ENCODE measurements at regions of chr7 and their contacts with region 1.

Region 1: GRCh38 chr7:816300-816750 is 16.0 kb upstream of the SUN1 start:
- DNase-seq: peak; percentile 98
- H3K4me3 ChIP-seq: peak overlapping the region; percentile 67 to 89 (median 86)
- H3K27ac ChIP-seq: peak overlapping the region; percentile 99
- H3K4me1 ChIP-seq: peaks cover 9 to 16% of the 10 kb centered on the region in 2 donors
- H3K27me3 ChIP-seq: no peaks in the 10 kb centered on the region
- CTCF ChIP-seq: no peak
- POLR2A ChIP-seq: no peak

Region 2: DNA sequence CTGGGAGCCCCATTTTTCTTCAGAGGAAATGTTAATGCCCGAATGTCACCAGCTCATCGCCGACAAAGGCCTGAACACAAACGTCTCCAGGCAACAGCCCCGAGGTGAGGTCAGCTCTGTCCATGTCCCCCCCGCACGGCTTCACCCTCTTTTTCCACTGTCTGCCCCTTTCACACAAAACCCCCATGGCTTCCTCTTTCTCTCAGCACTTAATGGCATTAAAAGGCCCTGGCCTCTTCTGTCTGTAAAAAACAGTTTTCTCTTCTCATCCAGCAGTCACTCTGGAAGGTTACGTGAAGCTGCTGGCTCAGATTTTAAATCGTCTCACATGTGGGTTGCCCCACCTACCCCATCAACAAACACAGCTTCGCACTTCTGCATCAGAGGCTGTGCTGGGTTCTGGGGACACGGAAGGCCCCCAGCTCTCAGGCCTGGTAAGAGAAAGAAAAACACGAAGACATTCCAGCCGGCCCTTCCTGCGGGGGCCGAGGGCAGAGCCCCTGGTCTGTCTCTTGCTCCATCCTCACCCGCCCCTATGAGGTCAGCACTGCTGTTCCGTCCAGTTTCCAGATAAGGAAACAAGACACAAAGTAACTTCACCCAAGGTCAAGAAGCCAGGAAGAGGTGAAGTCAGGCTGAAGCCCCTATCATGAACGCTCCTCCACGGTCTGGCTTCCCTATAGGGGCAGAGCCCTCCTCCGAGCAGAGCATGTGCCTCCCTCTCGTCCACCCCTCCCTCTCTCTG is 205.6 kb before region 1 on chr7:
- intact Hi-C with region 1: no loop called
- DNase-seq: no peak
- H3K4me3 ChIP-seq: peak overlapping the region in 1 of 3 donors; percentile 8
- H3K27ac ChIP-seq: peak overlapping the region; percentile 57 to 87
- H3K4me1 ChIP-seq: no peaks in the 10 kb centered on the region
- H3K27me3 ChIP-seq: no peaks in the 10 kb centered on the region
- CTCF ChIP-seq: no peak
- POLR2A ChIP-seq: no peak

Region 3: GRCh38 chr7:876167-876967 is 60.0 kb after region 1 on chr7 and contains the start of gene GET4:
- intact Hi-C with region 1: loop called (anchors 5 kb)
- DNase-seq: peak; percentile 97
- H3K4me3 ChIP-seq: peak within 1 kb of the TSS; percentile 72 to 89 (median 86)
- H3K27ac ChIP-seq: peak within 1 kb of the TSS; percentile 94 to 95
- H3K4me1 ChIP-seq: peaks cover 0 to 5% of the 10 kb centered on the region in 2 donors
- H3K27me3 ChIP-seq: no peaks in the 10 kb centered on the region
- CTCF ChIP-seq: no peak
- POLR2A ChIP-seq: peak; percentile 76
- total RNA-seq, gene GET4: 23.7 to 33.4 (median 29.5) TPM

Measured in breast epithelium (tissue), 4 donors.